ENCODE measurements at regions of chr13 and their contacts with region 1.

Region 1: DNA sequence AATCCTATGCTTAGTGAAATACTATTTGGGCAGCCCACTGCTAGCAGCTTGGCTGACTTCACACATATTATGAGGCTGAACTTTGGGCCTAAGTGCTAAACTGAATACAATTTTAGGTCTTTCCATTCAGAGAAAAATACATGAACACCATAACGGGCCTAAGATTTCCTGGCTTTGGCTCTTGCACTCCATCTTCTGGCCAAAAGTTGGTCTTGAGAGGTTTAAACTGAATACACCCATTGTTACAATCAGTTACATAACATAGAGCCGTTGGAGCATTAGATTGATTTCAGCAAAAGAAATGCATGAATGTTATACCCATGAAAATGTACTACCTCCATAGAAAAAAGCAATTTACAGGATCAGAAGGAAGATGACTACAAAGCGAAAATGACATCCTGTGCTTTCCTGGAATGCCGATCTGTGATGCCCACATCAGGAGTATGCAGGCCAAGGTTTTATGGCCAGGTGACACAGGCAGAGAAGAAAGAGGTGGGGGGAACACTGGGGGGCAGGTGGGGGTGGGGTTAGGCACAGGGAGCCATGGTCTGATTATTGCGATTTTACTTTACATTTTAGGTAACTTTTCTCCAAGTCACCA is 11.1 kb upstream of the SHISA2 start:
- DNase-seq: no peak
- ATAC-seq: peak; percentile 61 to 89 (median 74)
- H3K4me3 ChIP-seq: no peak overlapping the region
- H3K27ac ChIP-seq: no peak overlapping the region
- H3K4me1 ChIP-seq: peaks cover 5% of the 10 kb centered on the region
- H3K27me3 ChIP-seq: no peaks in the 10 kb centered on the region
- CTCF ChIP-seq: peak; percentile 72

Region 2: GRCh38 chr13:25625414-25625813 is 437.5 kb before region 1 on chr13:
- intact Hi-C with region 1: no loop called
- DNase-seq: no peak
- ATAC-seq: no peak
- H3K4me3 ChIP-seq: no peak overlapping the region
- H3K27ac ChIP-seq: no peak overlapping the region
- H3K4me1 ChIP-seq: no peaks in the 10 kb centered on the region
- H3K27me3 ChIP-seq: no peaks in the 10 kb centered on the region
- CTCF ChIP-seq: no peak

Region 3: DNA sequence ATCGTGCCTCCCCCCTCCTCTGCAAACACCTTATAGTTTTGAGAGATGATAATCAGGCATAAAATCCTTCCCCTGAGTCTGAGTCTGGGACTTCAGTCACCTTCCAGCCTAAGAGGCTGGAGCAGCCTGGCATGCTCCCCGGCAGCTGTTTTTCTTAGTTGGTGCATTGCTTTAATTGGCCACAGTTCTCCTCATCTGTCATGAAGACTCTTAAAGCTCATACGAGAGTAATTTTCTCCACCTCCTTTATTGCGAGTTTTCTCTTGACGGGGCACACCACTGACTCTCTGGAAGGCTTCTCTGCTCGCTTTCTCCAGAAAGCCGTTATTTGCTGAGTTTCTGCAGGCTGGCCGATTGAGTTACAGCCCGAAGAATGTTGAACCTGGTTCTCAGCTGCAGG is 380.7 kb before region 1 on chr13:
- intact Hi-C with region 1: loop called in 1 of 2 experiments (anchors 5 kb)
- DNase-seq: no peak
- ATAC-seq: peak in 1 of 4 donors; percentile 32
- H3K4me3 ChIP-seq: no peak overlapping the region
- H3K27ac ChIP-seq: no peak overlapping the region
- H3K4me1 ChIP-seq: peaks cover 17% of the 10 kb centered on the region
- H3K27me3 ChIP-seq: no peaks in the 10 kb centered on the region
- CTCF ChIP-seq: no peak

Measured in psoas muscle (tissue), 8 donors.